AG04450 (cell line): ENCODE measurements at regions of chr12 and their contacts with region 1.

Region 1: DNA sequence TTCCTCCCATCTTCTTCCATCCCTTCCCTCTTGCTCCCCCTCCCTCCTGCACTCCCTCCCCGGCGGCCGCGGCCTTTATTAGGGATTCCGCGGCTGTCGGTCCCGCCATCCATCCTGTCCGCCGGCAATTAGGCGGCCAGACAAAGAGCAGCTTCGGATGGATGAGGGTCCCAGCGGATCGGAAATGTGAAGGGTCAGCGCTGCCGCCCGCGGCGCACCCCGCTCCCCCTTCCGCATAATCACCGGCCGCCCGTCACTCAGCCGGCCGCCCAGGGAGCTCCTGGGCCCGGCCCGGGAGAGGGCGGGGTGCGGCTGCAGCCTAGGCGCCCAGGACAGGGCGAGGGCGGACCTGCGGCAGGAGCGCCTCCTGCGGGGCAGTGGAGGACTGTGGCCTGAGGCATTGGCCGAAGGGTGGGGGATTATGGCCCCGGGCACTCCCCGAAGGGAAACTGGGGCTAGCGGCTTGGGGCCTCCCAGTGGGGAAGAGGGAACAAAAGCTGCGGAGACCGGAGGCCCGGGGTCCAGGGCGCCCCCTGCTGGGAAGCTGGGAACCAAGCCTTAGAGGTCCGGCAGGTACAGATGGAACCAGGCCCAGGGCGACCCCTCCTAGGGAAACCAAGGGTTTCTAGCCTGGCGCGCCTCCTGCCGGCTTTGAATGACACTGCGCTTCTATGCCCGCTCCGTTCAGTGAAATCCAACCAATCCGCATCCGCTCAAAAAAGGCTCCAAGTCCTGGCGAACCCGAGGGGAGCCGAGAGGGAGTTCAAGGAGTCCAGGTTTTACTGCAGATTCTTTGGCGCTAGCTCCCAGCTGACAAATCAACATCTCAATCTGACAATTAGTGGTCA is 4.4 kb upstream of the DNAJC22 start:
- DNase-seq: peak; percentile 30
- H3K4me3 ChIP-seq: peak overlapping the region; percentile 49
- H3K27ac ChIP-seq: no peak overlapping the region
- H3K27me3 ChIP-seq: peaks cover 85% of the 10 kb centered on the region
- CTCF ChIP-seq: peak; percentile 70

Region 2: GRCh38 chr12:49138587-49138986 is 203.7 kb before region 1 on chr12:
- CTCF ChIA-PET with region 1: no interaction called
- POLR2A ChIA-PET with region 1: no interaction called
- DNase-seq: no peak
- H3K4me3 ChIP-seq: no peak overlapping the region
- H3K27ac ChIP-seq: no peak overlapping the region
- H3K27me3 ChIP-seq: no peaks in the 10 kb centered on the region
- CTCF ChIP-seq: no peak

Region 3: DNA sequence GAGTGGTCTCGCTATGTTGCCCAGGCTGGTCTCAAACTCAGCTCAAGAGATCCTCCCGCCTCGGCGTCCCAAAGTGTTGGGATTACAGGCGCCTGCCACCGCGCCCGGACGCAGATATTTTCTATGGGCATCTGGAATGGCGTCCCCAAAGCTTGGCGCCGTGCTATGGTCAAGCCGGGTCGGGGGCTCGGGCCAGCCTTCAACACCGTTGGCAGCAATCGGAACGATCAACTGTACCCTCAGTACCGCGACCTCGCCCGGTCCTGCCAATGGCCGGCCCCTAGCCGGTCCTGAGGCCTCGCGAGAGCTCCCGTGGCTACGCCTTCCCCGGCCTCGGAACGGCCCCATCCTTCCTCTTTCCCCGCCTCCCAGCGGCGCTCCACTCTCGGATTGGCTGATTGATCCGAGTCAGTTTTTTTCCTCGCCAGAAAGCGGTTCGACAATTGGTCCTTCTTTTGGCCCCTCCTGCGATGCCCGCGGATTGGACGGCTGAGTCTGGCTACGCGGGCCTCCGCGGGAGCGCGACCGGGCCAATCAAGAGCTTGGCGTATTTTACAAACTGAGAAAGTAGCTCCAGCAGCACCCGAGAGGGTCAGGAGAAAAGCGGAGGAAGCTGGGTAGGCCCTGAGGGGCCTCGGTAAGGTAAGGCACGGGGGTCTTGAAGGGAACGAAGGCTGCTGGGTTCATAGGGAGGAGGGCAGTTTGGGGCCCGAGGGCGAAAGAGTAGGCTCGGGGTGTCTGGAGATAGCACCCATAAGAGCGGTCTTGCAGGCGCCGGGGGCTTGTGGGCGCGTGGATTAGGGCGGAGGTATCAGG is 19.4 kb before region 1 on chr12 and contains the start of gene TROAP:
- CTCF ChIA-PET with region 1: interaction called, 18 read pairs
- POLR2A ChIA-PET with region 1: interaction called, 3 read pairs
- DNase-seq: peak; percentile 95
- H3K4me3 ChIP-seq: peak within 1 kb of the TSS; percentile 84
- H3K27ac ChIP-seq: peak within 1 kb of the TSS; percentile 47
- H3K27me3 ChIP-seq: peaks cover 4% of the 10 kb centered on the region
- CTCF ChIP-seq: no peak
- polyA plus RNA-seq, gene TROAP: 7.6 and 10.3 TPM in 2 replicates

Region 4: DNA sequence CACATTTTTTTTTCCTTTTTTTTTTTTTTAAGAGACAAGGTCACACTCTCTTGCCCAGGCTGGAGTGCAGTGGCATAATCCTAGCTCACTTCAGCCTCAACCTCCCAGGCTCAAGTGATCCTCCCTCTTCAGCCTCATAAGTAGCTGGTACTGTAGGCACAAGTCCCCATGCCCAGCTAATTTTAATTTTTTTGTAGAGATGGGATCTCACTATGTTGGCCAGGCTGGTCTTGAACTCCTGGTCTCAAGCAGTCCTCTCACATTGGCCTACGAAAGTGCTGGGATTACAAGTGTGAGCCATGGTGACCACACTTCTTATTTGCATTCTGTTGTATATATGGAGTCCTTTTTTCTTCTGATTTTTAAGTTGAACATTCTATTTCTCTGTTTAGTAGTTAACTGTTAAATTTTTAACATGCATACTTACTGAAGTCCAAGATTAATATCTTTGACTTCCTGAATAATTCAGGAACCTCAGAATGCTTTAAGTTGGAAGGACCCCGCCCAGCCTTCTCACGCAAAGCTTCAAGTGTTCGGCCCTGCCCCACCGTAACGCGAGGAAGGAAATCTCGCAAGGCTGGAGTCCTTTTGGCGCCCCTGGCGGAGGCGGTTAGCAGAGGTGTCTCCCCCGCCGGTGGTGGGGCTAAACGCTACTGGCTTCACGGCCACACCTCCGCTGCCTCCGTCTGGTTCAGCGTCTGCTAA is 46.5 kb after region 1 on chr12:
- CTCF ChIA-PET with region 1: no interaction called
- POLR2A ChIA-PET with region 1: no interaction called
- DNase-seq: no peak
- H3K4me3 ChIP-seq: no peak overlapping the region
- H3K27ac ChIP-seq: no peak overlapping the region
- H3K27me3 ChIP-seq: no peaks in the 10 kb centered on the region
- CTCF ChIP-seq: no peak

Region 5: GRCh38 chr12:49403971-49404450 is 61.7 kb after region 1 on chr12:
- CTCF ChIA-PET with region 1: no interaction called
- POLR2A ChIA-PET with region 1: no interaction called
- DNase-seq: no peak
- H3K4me3 ChIP-seq: no peak overlapping the region
- H3K27ac ChIP-seq: no peak overlapping the region
- H3K27me3 ChIP-seq: no peaks in the 10 kb centered on the region
- CTCF ChIP-seq: no peak